ENCODE measurements at regions of chr6 and their contacts with region 1.

Region 1: GRCh38 chr6:90586836-90587638 is at the start of gene MAP3K7:
- DNase-seq: peak; percentile 98
- H3K4me3 ChIP-seq: peak within 1 kb of the TSS; percentile 84 to 100 (median 95)
- H3K27ac ChIP-seq: peak within 1 kb of the TSS; percentile 88
- H3K4me1 ChIP-seq: peaks cover 22% of the 10 kb centered on the region
- H3K27me3 ChIP-seq: peaks cover 2 to 4% of the 10 kb centered on the region in 2 experiments
- CTCF ChIP-seq: no peak
- POLR2A ChIP-seq: peak; percentile 86
- total RNA-seq, gene MAP3K7: 24.5 and 25.6 TPM in 2 replicates

Region 2: DNA sequence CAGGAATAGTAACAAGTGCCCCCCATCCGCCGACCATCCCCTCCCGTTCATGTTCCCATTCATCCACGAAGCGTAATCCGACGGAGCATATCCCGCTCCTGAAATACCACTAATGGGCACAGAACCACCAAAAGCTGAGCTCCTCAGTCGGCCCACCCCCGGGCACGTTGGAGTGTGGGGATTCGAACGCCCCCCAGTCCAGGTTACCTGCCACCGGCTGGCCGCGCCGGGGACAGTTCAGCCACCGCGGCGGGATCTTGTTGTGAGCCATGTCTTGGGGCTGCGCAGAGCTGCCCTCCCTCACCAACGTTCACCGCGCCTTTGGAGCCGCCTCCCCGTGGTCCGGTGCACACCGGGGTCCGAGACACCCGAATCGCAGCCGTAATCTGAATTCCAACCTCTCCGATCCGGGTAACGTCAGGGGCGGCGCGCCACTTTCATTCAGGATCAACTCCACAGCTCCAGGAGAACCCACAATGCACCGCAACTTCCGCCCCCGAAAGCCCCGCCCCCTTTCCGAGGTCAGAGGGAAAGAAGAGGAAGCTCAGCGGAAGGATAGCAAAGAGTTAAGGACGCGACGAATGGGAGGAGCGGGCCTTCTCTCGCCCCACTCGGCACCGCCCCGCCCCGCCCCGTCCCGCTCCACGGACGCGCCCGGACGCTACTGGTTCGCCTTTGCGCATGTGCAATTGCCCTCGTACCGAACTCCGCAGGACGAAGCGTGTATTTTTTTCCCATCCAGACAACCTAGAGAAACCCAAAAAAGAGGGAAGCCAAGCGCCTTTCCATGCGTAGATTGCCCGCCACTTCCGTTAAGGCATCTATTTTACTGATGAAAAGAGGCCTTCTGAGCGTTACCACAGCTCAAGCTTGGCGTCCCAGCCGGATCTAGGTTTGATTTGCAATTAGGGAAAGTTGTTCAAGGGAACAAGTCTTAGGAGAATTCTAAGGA is 1623.6 kb before region 1 on chr6 and contains the start of gene RNGTT:
- CTCF ChIA-PET with region 1: no interaction called
- POLR2A ChIA-PET with region 1: no interaction called
- dilution Hi-C with region 1: no loop called
- intact Hi-C with region 1: loop called (anchors 10 kb)
- DNase-seq: peak; percentile 98
- H3K4me3 ChIP-seq: peak within 1 kb of the TSS; percentile 93 to 99 (median 96)
- H3K27ac ChIP-seq: peak within 1 kb of the TSS; percentile 71
- H3K4me1 ChIP-seq: peaks cover 12% of the 10 kb centered on the region
- H3K27me3 ChIP-seq: no peaks in the 10 kb centered on the region
- CTCF ChIP-seq: no peak
- POLR2A ChIP-seq: peak; percentile 50
- total RNA-seq, gene RNGTT: 13.1 and 13.5 TPM in 2 replicates

Region 3: GRCh38 chr6:90493332-90493731 is 93.7 kb before region 1 on chr6:
- CTCF ChIA-PET with region 1: no interaction called
- POLR2A ChIA-PET with region 1: no interaction called
- dilution Hi-C with region 1: no loop called
- intact Hi-C with region 1: loop called (anchors 1 kb)
- DNase-seq: peak; percentile 91
- H3K4me3 ChIP-seq: no peak overlapping the region
- H3K27ac ChIP-seq: peak overlapping the region; percentile 66
- H3K4me1 ChIP-seq: peaks cover 36% of the 10 kb centered on the region
- H3K27me3 ChIP-seq: no peaks in the 10 kb centered on the region
- CTCF ChIP-seq: no peak
- POLR2A ChIP-seq: peak; percentile 46

Region 4: DNA sequence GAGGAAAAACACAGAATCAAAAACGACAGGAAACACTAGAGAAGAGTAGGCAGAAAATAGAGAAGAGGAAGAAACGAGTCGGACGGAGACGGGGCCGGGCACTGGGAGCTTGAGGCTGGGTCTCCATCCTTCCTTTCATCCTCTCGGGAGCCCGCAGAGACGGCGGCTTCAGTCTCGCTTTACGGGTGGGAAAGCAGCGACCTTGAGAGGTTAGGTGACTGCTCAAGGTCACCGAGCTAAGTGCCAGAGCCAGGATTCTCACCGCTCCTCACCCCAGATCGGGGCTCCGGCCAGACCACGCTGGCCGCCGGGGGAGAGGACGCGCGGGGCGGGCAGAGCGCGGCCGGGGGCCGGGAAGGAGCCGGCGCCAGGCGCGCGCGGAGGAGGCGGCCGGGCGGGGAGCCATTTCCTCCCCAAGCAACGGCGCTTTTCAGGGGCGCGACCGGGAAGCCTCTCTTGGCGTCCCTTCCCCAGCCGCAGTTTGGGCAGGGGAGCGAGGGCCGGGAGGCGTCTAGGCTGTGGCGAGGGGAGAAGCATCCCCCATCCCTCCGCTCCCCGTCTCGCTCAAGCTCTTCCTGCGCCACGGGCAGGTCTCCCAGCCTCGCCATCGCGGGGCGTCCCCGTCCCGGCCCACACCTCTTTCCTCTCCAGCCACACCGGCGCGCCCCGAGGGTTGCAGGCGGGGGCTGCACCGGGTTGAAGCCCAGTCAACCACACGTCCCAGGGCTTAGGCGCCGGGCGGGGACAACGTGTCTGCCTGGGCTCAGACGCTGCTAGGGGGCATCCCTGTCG is 23.9 kb after region 1 on chr6:
- CTCF ChIA-PET with region 1: no interaction called
- POLR2A ChIA-PET with region 1: no interaction called
- dilution Hi-C with region 1: no loop called
- intact Hi-C with region 1: loop called (anchors 1 kb)
- DNase-seq: peak; percentile 28
- H3K4me3 ChIP-seq: peak overlapping the region; percentile 38 to 57 (median 41)
- H3K27ac ChIP-seq: no peak overlapping the region
- H3K4me1 ChIP-seq: peaks cover 4% of the 10 kb centered on the region
- H3K27me3 ChIP-seq: peaks cover 20 to 49% of the 10 kb centered on the region in 2 experiments
- CTCF ChIP-seq: no peak
- POLR2A ChIP-seq: no peak